Mammary epithelial cell (primary cell): ENCODE measurements at regions of chr11 and their contacts with region 1.

Region 1: DNA sequence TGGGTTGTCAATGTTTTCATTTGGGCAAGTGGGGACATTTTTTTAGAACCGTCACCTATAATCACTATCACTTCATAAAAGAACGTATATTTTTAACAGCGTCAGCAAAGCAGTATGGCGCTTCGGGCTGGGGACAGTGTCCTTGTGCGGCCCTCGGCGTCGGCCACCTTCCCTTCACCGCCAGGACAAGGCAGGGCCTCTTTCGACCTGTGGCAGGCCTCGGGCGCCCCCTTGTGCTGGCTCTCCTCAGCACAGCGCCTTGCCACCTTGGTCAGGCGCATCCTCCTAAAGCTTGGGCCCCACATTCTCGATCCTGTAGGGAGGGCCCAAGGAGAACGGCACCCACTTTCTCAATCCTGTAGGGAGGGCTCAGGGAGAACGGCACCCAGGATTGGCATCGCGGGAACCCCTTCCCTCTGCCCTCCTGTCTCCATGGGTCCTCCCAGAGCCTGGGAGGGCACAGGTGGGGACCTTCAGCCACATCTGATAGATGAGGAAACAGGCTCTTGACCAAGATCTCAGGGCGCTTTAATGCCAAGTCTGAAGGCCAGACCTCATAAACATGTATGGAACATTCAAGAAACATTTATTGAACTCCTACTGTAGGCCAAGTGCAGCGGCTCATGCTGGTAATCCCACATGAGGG is 11.5 kb upstream of the FADD start:
- DNase-seq: peak; percentile 56
- H3K4me3 ChIP-seq: no peak overlapping the region
- H3K27ac ChIP-seq: no peak overlapping the region
- H3K4me1 ChIP-seq: peaks cover 10% of the 10 kb centered on the region
- H3K27me3 ChIP-seq: no peaks in the 10 kb centered on the region
- CTCF ChIP-seq: peak; percentile 92 to 97

Region 2: GRCh38 chr11:69101115-69101791 is 1090.4 kb before region 1 on chr11:
- CTCF ChIA-PET with region 1: no interaction called
- dilution Hi-C with region 1: no loop called
- in situ Hi-C with region 1: loop called in 1 of 2 experiments (anchors 25 kb)
- intact Hi-C with region 1: loop called (anchors 10 kb)
- DNase-seq: peak; percentile 74
- H3K4me3 ChIP-seq: no peak overlapping the region
- H3K27ac ChIP-seq: no peak overlapping the region
- H3K4me1 ChIP-seq: peaks cover 3% of the 10 kb centered on the region
- H3K27me3 ChIP-seq: no peaks in the 10 kb centered on the region
- CTCF ChIP-seq: peak; percentile 97 to 100

Region 3: DNA sequence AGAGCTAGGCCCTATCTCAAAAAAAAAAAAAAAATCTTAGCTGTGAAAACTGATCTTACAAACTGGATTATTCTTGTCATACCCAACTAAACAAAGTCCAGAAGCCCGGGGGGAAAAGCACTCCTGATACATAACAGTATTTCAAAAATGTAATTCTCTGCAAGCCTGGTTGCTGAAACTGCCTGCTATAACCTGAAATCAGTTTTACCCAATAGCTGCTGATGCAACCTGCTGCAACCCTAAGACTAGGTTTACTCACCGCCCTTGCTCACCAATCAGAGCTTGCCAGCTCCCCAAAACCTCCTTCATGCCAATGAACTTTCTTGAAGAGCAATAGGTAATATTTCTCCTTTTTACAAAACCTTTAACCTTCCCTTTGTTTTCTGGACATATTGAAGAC is 500.2 kb before region 1 on chr11:
- CTCF ChIA-PET with region 1: no interaction called
- dilution Hi-C with region 1: no loop called
- in situ Hi-C with region 1: loop called (anchors 5 kb)
- intact Hi-C with region 1: loop called (anchors 1 kb)
- DNase-seq: peak; percentile 35
- H3K4me3 ChIP-seq: no peak overlapping the region
- H3K27ac ChIP-seq: no peak overlapping the region
- H3K4me1 ChIP-seq: peaks cover 9% of the 10 kb centered on the region
- H3K27me3 ChIP-seq: no peaks in the 10 kb centered on the region
- CTCF ChIP-seq: no peak

Region 4: DNA sequence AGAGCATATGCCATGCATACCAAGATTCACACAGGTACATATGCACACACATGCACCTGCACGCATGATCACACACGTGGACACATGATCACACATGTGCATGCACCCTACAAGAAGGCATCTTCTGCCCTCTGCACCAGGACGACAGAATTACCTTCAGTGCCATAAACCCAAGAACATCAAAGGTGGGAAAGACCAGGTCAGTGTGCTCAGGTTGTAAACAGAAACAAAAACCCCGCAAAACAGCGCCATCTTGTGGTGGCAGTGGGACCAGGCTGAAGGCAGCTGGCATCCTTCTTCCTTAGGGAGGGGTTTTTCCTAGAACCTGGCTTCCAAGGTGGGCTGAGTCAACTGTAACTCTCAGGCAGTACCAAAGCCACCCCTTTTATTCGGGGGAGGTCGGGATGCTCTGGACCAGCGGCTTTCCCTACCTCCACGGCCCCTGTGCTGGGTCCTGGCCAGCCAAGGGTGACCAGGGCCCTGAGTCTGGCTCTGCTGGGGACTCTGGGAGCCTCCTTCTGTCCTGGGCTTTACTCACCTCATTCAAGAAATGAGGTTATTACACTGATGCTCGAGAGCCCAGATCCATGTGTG is 303.0 kb before region 1 on chr11:
- CTCF ChIA-PET with region 1: no interaction called
- dilution Hi-C with region 1: no loop called
- in situ Hi-C with region 1: no loop called
- intact Hi-C with region 1: loop called (anchors 1 kb)
- DNase-seq: peak; percentile 48
- H3K4me3 ChIP-seq: no peak overlapping the region
- H3K27ac ChIP-seq: no peak overlapping the region
- H3K4me1 ChIP-seq: no peaks in the 10 kb centered on the region
- H3K27me3 ChIP-seq: no peaks in the 10 kb centered on the region
- CTCF ChIP-seq: peak; percentile 94 to 99

Region 5: DNA sequence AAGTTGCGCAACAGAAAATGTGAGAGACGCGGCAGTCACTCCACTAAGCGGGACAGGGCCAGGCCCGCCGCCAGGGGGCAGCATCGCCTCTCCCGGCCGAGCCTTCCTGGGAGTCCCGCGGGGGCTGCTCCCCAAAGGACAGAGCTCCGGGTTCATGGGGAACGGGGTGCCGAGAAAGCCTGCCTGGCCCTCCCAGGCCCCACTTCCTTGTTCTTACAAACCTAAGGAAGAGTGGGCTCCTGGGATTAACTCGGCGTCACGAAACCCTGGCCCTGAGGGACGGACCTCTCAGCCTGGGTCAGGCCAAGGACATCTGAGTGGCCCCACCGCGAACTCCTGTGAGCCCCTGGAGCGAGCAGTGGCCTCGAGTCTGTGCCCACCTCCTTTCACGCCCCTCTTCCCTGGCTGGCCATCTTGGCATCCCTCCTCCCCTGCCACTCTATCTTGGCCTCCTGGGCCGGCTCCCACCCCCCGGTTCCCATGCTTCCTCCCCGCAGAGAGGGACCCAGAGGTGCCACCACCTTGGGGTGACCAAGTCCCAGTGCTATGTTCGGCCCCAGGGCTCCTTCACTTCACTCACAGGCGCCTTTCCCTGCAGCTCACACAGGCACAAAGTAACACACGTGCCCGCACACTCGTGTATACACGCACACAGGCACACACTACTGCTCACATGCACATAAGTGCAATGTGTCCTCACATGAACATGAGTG is 272.5 kb before region 1 on chr11:
- CTCF ChIA-PET with region 1: interaction called, 3 read pairs
- dilution Hi-C with region 1: loop called (anchors 5 kb)
- in situ Hi-C with region 1: loop called (anchors 5 kb)
- intact Hi-C with region 1: loop called (anchors 1 kb)
- DNase-seq: peak; percentile 39
- H3K4me3 ChIP-seq: no peak overlapping the region
- H3K27ac ChIP-seq: no peak overlapping the region
- H3K4me1 ChIP-seq: peaks cover 33% of the 10 kb centered on the region
- H3K27me3 ChIP-seq: no peaks in the 10 kb centered on the region
- CTCF ChIP-seq: peak; percentile 79 to 96

Region 6: DNA sequence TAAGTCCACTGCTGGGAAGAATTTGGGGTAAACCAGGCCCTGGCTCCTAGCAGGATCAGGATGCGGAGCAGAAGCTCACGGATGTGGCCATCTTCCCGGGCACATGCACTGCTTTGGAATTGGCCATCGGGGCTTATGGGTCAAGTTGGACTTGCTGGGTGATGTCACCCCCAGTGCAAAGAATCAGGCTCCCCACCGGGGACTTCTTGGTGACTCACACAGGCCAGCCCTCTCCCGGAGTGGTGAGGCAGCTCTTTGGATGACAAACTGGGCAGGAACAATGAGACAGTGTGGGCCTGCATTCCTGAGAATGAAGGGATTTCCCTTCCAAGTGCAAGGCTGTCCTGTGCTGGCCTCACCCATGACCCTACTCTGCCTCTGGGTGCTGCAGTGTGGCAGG is 242.3 kb before region 1 on chr11:
- CTCF ChIA-PET with region 1: interaction called, 5 read pairs
- dilution Hi-C with region 1: no loop called
- in situ Hi-C with region 1: no loop called
- intact Hi-C with region 1: loop called (anchors 1 kb)
- DNase-seq: peak; percentile 98
- H3K4me3 ChIP-seq: no peak overlapping the region
- H3K27ac ChIP-seq: peak overlapping the region; percentile 93
- H3K4me1 ChIP-seq: peaks cover 31% of the 10 kb centered on the region
- H3K27me3 ChIP-seq: no peaks in the 10 kb centered on the region
- CTCF ChIP-seq: no peak

Region 7: DNA sequence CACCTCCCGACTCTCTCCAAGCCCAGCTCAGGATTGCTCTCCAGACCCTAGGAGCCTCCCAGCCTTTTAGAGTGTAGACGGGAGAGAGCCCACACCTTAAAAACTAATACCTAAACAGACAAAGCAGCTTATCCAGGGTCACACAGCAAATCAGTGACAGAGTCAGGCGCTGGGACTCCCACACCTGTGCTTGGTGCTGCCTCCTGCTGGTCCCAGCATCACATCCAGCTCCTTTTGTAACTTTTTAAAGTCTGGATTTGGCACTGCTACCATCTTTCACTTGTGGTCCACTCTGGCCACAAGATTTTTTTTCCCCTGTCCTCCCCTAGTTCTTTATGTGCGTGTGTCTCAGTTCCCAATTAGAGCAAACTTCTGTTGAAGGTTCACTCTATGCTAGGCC is 108.8 kb before region 1 on chr11:
- CTCF ChIA-PET with region 1: no interaction called
- dilution Hi-C with region 1: no loop called
- in situ Hi-C with region 1: no loop called
- intact Hi-C with region 1: loop called (anchors 5 kb)
- DNase-seq: no peak
- H3K4me3 ChIP-seq: no peak overlapping the region
- H3K27ac ChIP-seq: no peak overlapping the region
- H3K4me1 ChIP-seq: peaks cover 49% of the 10 kb centered on the region
- H3K27me3 ChIP-seq: no peaks in the 10 kb centered on the region
- CTCF ChIP-seq: peak; percentile 37 to 51